GM12878 (cell line): ENCODE measurements at regions of chr6 and their contacts with region 1.

Region 1: GRCh38 chr6:122869437-122870024 is 80.5 kb downstream of the SMPDL3A start:
- DNase-seq: no peak
- ATAC-seq: peak; percentile 90
- H3K4me3 ChIP-seq: no peak overlapping the region
- H3K27ac ChIP-seq: no peak overlapping the region
- H3K4me1 ChIP-seq: no peaks in the 10 kb centered on the region
- H3K27me3 ChIP-seq: no peaks in the 10 kb centered on the region
- CTCF ChIP-seq: peak; percentile 49 to 62 (median 62); a peak in 4 of 6 replicates
- EP300 ChIP-seq: no peak
- POLR2A ChIP-seq: no peak
- RAD21 ChIP-seq: peak; percentile 81

Region 2: GRCh38 chr6:122751326-122751725 is 118.2 kb before region 1 on chr6:
- CTCF ChIA-PET with region 1: interaction called, 25 read pairs
- POLR2A ChIA-PET with region 1: no interaction called
- RAD21 ChIA-PET with region 1: interaction called, 3 read pairs
- SMC1A ChIA-PET with region 1: no interaction called
- in situ Hi-C with region 1: no loop called
- intact Hi-C with region 1: no loop called
- DNase-seq: no peak
- ATAC-seq: peak; percentile 75
- H3K4me3 ChIP-seq: no peak overlapping the region
- H3K27ac ChIP-seq: no peak overlapping the region
- H3K4me1 ChIP-seq: 0 out of 2 replicates have a peak, but pooled peaks cover 3% of the 10 kb centered on the region
- H3K27me3 ChIP-seq: no peaks in the 10 kb centered on the region
- CTCF ChIP-seq: no peak
- EP300 ChIP-seq: no peak
- POLR2A ChIP-seq: no peak
- RAD21 ChIP-seq: no peak

Region 3: GRCh38 chr6:122766256-122766655 is 103.3 kb before region 1 on chr6:
- CTCF ChIA-PET with region 1: no interaction called
- POLR2A ChIA-PET with region 1: no interaction called
- RAD21 ChIA-PET with region 1: no interaction called
- SMC1A ChIA-PET with region 1: no interaction called
- in situ Hi-C with region 1: no loop called
- intact Hi-C with region 1: no loop called
- DNase-seq: no peak
- ATAC-seq: no peak
- H3K4me3 ChIP-seq: no peak overlapping the region
- H3K27ac ChIP-seq: no peak overlapping the region
- H3K4me1 ChIP-seq: no peaks in the 10 kb centered on the region
- H3K27me3 ChIP-seq: no peaks in the 10 kb centered on the region
- CTCF ChIP-seq: no peak
- EP300 ChIP-seq: no peak
- POLR2A ChIP-seq: no peak
- RAD21 ChIP-seq: no peak

Region 4: DNA sequence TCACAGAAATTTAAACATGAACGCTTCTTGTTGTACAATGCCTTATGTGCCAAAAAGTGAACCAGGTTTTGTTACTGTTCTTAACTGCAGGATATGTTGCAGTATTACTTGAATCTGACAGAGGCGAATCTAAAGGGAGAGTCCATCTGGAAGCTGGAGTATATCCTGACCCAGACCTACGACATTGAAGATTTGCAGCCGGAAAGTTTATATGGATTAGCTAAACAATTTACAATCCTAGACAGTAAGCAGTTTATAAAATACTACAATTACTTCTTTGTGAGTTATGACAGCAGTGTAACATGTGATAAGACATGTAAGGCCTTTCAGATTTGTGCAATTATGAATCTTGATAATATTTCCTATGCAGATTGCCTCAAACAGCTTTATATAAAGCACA is 60.5 kb before region 1 on chr6:
- CTCF ChIA-PET with region 1: no interaction called
- POLR2A ChIA-PET with region 1: no interaction called
- RAD21 ChIA-PET with region 1: no interaction called
- SMC1A ChIA-PET with region 1: no interaction called
- in situ Hi-C with region 1: no loop called
- intact Hi-C with region 1: no loop called
- DNase-seq: no peak
- ATAC-seq: no peak
- H3K4me3 ChIP-seq: no peak overlapping the region
- H3K27ac ChIP-seq: no peak overlapping the region
- H3K4me1 ChIP-seq: no peaks in the 10 kb centered on the region
- H3K27me3 ChIP-seq: no peaks in the 10 kb centered on the region
- CTCF ChIP-seq: no peak
- EP300 ChIP-seq: no peak
- POLR2A ChIP-seq: no peak
- RAD21 ChIP-seq: no peak

Region 5: GRCh38 chr6:122886475-122886874 is 16.9 kb after region 1 on chr6:
- CTCF ChIA-PET with region 1: interaction called, 10 read pairs
- POLR2A ChIA-PET with region 1: no interaction called
- RAD21 ChIA-PET with region 1: interaction called, 4 read pairs
- SMC1A ChIA-PET with region 1: interaction called, 15 read pairs
- in situ Hi-C with region 1: no loop called
- intact Hi-C with region 1: no loop called
- DNase-seq: no peak
- ATAC-seq: no peak
- H3K4me3 ChIP-seq: no peak overlapping the region
- H3K27ac ChIP-seq: no peak overlapping the region
- H3K4me1 ChIP-seq: no peaks in the 10 kb centered on the region
- H3K27me3 ChIP-seq: no peaks in the 10 kb centered on the region
- CTCF ChIP-seq: no peak
- EP300 ChIP-seq: no peak
- POLR2A ChIP-seq: no peak
- RAD21 ChIP-seq: no peak

Region 6: GRCh38 chr6:122947355-122947754 is 77.8 kb after region 1 on chr6:
- CTCF ChIA-PET with region 1: interaction called, 60 read pairs
- POLR2A ChIA-PET with region 1: no interaction called
- RAD21 ChIA-PET with region 1: interaction called, 25 read pairs
- SMC1A ChIA-PET with region 1: interaction called, 56 read pairs
- in situ Hi-C with region 1: no loop called
- intact Hi-C with region 1: no loop called
- DNase-seq: no peak
- ATAC-seq: peak; percentile 57; the same call in 2 of the 3 replicates
- H3K4me3 ChIP-seq: no peak overlapping the region
- H3K27ac ChIP-seq: no peak overlapping the region
- H3K4me1 ChIP-seq: no peaks in the 10 kb centered on the region
- H3K27me3 ChIP-seq: no peaks in the 10 kb centered on the region
- CTCF ChIP-seq: peak; percentile 17 to 35 (median 35); a peak in 3 of 6 replicates
- EP300 ChIP-seq: no peak
- POLR2A ChIP-seq: no peak
- RAD21 ChIP-seq: no peak

Region 7: GRCh38 chr6:123007885-123008284 is 138.4 kb after region 1 on chr6:
- CTCF ChIA-PET with region 1: interaction called, 4 read pairs
- POLR2A ChIA-PET with region 1: no interaction called
- RAD21 ChIA-PET with region 1: interaction called, 6 read pairs
- SMC1A ChIA-PET with region 1: interaction called, 11 read pairs
- in situ Hi-C with region 1: no loop called
- intact Hi-C with region 1: no loop called
- DNase-seq: no peak
- ATAC-seq: no peak
- H3K4me3 ChIP-seq: no peak overlapping the region
- H3K27ac ChIP-seq: no peak overlapping the region
- H3K4me1 ChIP-seq: no peaks in the 10 kb centered on the region
- H3K27me3 ChIP-seq: no peaks in the 10 kb centered on the region
- CTCF ChIP-seq: no peak
- EP300 ChIP-seq: no peak
- POLR2A ChIP-seq: no peak
- RAD21 ChIP-seq: no peak

Region 8: GRCh38 chr6:123316733-123317323 is 447.3 kb after region 1 on chr6:
- CTCF ChIA-PET with region 1: interaction called, 175 read pairs
- POLR2A ChIA-PET with region 1: no interaction called
- RAD21 ChIA-PET with region 1: interaction called, 91 read pairs
- SMC1A ChIA-PET with region 1: interaction called, 77 read pairs
- in situ Hi-C with region 1: loop called (anchors 10 kb)
- intact Hi-C with region 1: loop called (anchors 1 kb)
- DNase-seq: no peak
- ATAC-seq: no peak
- H3K4me3 ChIP-seq: no peak overlapping the region
- H3K27ac ChIP-seq: no peak overlapping the region
- H3K4me1 ChIP-seq: no peaks in the 10 kb centered on the region
- H3K27me3 ChIP-seq: no peaks in the 10 kb centered on the region
- CTCF ChIP-seq: peak in 1 of 3 experiments; percentile 26; a peak in 3 of 6 replicates
- EP300 ChIP-seq: no peak
- POLR2A ChIP-seq: no peak
- RAD21 ChIP-seq: peak; percentile 50; the same call in 1 of the 2 replicates

Region 9: DNA sequence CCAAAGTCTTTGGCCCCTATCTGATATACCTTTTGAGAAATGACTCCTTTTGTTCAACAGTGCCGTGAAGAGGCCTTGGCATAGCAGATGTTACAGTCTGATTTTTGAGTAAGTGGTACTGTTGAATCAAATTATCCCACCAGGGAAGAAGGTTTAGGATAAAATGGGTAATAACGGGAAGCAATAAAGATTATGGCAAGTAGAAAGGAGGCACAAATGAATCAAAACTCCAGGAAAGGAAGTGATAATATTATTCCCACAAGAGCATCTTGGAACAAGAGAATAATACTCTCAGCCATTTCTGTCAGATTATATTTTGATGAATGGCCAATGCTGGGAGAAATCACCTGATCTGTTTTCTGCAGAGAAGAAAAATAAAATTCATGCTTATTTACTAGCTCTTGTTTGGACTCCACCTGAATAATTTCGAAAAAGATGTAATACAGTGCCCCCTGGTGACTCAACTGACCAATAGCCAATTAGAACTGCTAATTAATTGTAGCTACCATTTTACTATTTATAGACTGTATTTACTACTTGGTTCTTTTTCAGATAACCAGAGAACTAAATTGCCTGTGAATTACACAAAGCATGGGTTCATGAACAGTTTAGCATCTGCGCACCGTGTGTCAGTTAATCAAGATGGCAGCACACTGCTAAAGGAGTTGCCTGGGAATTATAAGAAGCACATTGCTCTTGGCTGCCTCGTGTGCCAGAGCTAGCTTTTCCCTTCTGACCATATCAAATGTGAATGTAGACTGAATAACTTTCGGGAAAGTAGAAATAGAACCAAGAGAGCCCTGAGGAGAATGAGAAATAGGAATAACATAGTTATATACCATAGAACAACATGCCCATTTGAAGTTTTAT is 845.7 kb after region 1 on chr6:
- CTCF ChIA-PET with region 1: interaction called, 33 read pairs
- POLR2A ChIA-PET with region 1: no interaction called
- RAD21 ChIA-PET with region 1: interaction called, 34 read pairs
- SMC1A ChIA-PET with region 1: interaction called, 21 read pairs
- in situ Hi-C with region 1: no loop called
- intact Hi-C with region 1: loop called (anchors 10 kb)
- DNase-seq: no peak
- ATAC-seq: peak; percentile 83
- H3K4me3 ChIP-seq: no peak overlapping the region
- H3K27ac ChIP-seq: no peak overlapping the region
- H3K4me1 ChIP-seq: no peaks in the 10 kb centered on the region
- H3K27me3 ChIP-seq: no peaks in the 10 kb centered on the region
- CTCF ChIP-seq: peak; percentile 46 to 57 (median 50); a peak in 5 of 6 replicates
- EP300 ChIP-seq: no peak
- POLR2A ChIP-seq: no peak
- RAD21 ChIP-seq: peak; percentile 74